ENCODE measurements at regions of chr17 and their contacts with region 1.

Region 1: GRCh38 chr17:13569398-13570123 is 32.2 kb downstream of the HS3ST3A1 start:
- DNase-seq: no peak
- ATAC-seq: no peak
- H3K4me3 ChIP-seq: no peak overlapping the region
- H3K27ac ChIP-seq: no peak overlapping the region
- H3K4me1 ChIP-seq: no peaks in the 10 kb centered on the region
- H3K27me3 ChIP-seq: no peaks in the 10 kb centered on the region
- CTCF ChIP-seq: no peak
- EP300 ChIP-seq: no peak
- POLR2A ChIP-seq: no peak
- RAD21 ChIP-seq: no peak

Region 2: GRCh38 chr17:13462146-13462545 is 107.4 kb before region 1 on chr17:
- CTCF ChIA-PET with region 1: no interaction called
- POLR2A ChIA-PET with region 1: no interaction called
- RAD21 ChIA-PET with region 1: no interaction called
- SMC1A ChIA-PET with region 1: no interaction called
- in situ Hi-C with region 1: no loop called
- intact Hi-C with region 1: no loop called
- DNase-seq: no peak
- ATAC-seq: no peak
- H3K4me3 ChIP-seq: no peak overlapping the region
- H3K27ac ChIP-seq: no peak overlapping the region
- H3K4me1 ChIP-seq: no peaks in the 10 kb centered on the region
- H3K27me3 ChIP-seq: no peaks in the 10 kb centered on the region
- CTCF ChIP-seq: no peak
- EP300 ChIP-seq: no peak
- POLR2A ChIP-seq: no peak
- RAD21 ChIP-seq: no peak

Region 3: GRCh38 chr17:13545941-13546340 is 23.6 kb before region 1 on chr17:
- CTCF ChIA-PET with region 1: no interaction called
- POLR2A ChIA-PET with region 1: no interaction called
- RAD21 ChIA-PET with region 1: no interaction called
- SMC1A ChIA-PET with region 1: no interaction called
- in situ Hi-C with region 1: no loop called
- intact Hi-C with region 1: no loop called
- DNase-seq: no peak
- ATAC-seq: no peak
- H3K4me3 ChIP-seq: no peak overlapping the region
- H3K27ac ChIP-seq: no peak overlapping the region
- H3K4me1 ChIP-seq: no peaks in the 10 kb centered on the region
- H3K27me3 ChIP-seq: no peaks in the 10 kb centered on the region
- CTCF ChIP-seq: no peak
- EP300 ChIP-seq: no peak
- POLR2A ChIP-seq: no peak
- RAD21 ChIP-seq: no peak

Region 4: GRCh38 chr17:13582776-13583547 is 13.4 kb after region 1 on chr17:
- CTCF ChIA-PET with region 1: interaction called, 3 read pairs
- POLR2A ChIA-PET with region 1: interaction called, 7 read pairs
- RAD21 ChIA-PET with region 1: interaction called, 10 read pairs
- SMC1A ChIA-PET with region 1: interaction called, 10 read pairs
- in situ Hi-C with region 1: no loop called
- intact Hi-C with region 1: no loop called
- DNase-seq: no peak
- ATAC-seq: no peak
- H3K4me3 ChIP-seq: no peak overlapping the region
- H3K27ac ChIP-seq: no peak overlapping the region
- H3K4me1 ChIP-seq: no peaks in the 10 kb centered on the region
- H3K27me3 ChIP-seq: no peaks in the 10 kb centered on the region
- CTCF ChIP-seq: no peak
- EP300 ChIP-seq: no peak
- POLR2A ChIP-seq: no peak
- RAD21 ChIP-seq: no peak

Region 5: GRCh38 chr17:13624926-13625325 is 55.4 kb after region 1 on chr17:
- CTCF ChIA-PET with region 1: no interaction called
- POLR2A ChIA-PET with region 1: no interaction called
- RAD21 ChIA-PET with region 1: no interaction called
- SMC1A ChIA-PET with region 1: no interaction called
- in situ Hi-C with region 1: loop called (anchors 5 kb)
- intact Hi-C with region 1: no loop called
- DNase-seq: no peak
- ATAC-seq: no peak
- H3K4me3 ChIP-seq: no peak overlapping the region
- H3K27ac ChIP-seq: no peak overlapping the region
- H3K4me1 ChIP-seq: no peaks in the 10 kb centered on the region
- H3K27me3 ChIP-seq: no peaks in the 10 kb centered on the region
- CTCF ChIP-seq: no peak
- EP300 ChIP-seq: no peak
- POLR2A ChIP-seq: no peak
- RAD21 ChIP-seq: no peak